CD4-positive, alpha-beta memory T cell (primary cell): ENCODE measurements at regions of chr4 and their contacts with region 1.

Region 1: GRCh38 chr4:42519803-42520417 is 122.6 kb downstream of the SHISA3 start:
- DNase-seq: peak in 4 of 5 donors; percentile 19 to 40 (median 28)
- H3K4me3 ChIP-seq: no peak overlapping the region
- H3K4me3 Mint-ChIP-seq: no peak overlapping the region
- H3K27ac ChIP-seq: no peak overlapping the region
- H3K27ac Mint-ChIP-seq: peak overlapping the region in 1 of 7 donors; percentile 58
- H3K4me1 ChIP-seq: no peaks in the 10 kb centered on the region
- H3K4me1 Mint-ChIP-seq: no peaks in the 10 kb centered on the region
- H3K27me3 ChIP-seq: no peaks in the 10 kb centered on the region
- H3K27me3 Mint-ChIP-seq: no peaks in the 10 kb centered on the region

Region 2: DNA sequence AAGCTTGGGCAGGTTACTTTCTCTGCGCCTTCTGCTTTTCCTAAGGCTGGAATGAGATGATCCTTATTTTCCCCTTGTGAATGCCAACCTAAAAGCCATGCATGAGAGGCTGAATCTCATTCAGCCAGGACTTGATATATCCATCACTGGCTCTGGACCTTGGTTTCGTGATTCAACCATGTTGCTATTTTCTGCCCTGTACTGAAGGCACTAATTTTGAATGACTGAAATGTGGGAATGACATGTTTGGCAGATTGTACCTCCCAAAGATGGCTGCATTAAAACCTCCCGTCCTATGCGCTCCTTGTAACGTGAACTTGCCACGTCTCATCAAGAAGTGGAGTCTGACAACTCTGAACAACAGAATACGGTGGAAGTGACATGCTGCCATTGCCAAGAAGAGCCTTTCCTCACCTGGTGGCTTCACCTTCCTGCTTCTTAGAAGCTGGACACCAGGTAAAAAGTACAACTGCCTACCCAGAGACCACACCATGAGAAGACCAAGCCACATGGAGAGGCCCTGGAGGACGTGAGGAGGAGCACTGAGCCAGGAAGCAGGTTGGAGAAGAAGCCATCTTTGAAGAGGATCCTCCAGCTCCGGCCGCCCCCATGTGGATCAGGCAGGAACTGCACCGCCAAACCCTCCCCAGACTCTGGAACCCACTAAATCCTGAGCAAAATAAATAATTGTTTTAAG is 1595.7 kb before region 1 on chr4:
- CTCF ChIA-PET with region 1: no interaction called
- POLR2A ChIA-PET with region 1: no interaction called
- intact Hi-C with region 1: loop called (anchors 5 kb)
- DNase-seq: peak in 4 of 5 donors; percentile 32 to 47 (median 38)
- H3K4me3 ChIP-seq: no peak overlapping the region
- H3K4me3 Mint-ChIP-seq: no peak overlapping the region
- H3K27ac ChIP-seq: no peak overlapping the region
- H3K27ac Mint-ChIP-seq: peak overlapping the region in 1 of 7 donors; percentile 42
- H3K4me1 ChIP-seq: no peaks in the 10 kb centered on the region
- H3K4me1 Mint-ChIP-seq: peaks cover 0 to 6% (median 2%) of the 10 kb centered on the region in 4 donors
- H3K27me3 ChIP-seq: no peaks in the 10 kb centered on the region
- H3K27me3 Mint-ChIP-seq: peaks cover 14 to 17% of the 10 kb centered on the region in 2 donors

Region 3: DNA sequence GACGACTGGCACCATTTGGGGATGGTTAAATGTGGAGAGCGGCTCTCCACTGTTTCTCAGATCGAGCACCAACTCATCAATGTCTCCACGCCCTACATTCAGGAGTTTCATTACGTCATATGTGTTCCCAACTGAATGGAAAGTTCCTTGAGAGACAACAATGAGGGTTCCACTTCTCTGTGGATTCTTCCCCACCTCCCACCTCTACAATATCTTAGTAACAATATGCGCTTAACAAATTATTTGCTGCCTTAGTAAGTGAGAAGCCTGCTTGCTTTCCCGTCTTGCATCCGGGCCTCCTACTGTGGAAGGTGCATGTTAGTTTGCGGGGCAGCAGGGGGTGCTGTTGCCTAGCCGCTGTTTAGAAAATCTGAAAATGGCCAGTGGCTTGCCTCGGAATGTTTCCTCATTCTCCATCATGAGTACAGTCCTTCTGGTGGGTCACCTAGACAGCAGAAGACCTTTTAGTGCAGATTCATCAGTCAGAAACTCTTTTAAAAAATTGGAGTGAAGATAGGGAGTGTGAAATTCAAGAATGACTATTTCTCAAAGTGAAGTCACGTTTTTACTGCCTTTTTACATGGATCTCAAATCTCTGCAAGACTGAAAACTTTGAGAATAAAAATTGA is 827.1 kb before region 1 on chr4:
- CTCF ChIA-PET with region 1: no interaction called
- POLR2A ChIA-PET with region 1: no interaction called
- intact Hi-C with region 1: loop called (anchors 5 kb)
- DNase-seq: peak in 4 of 5 donors; percentile 2 to 18 (median 9)
- H3K4me3 ChIP-seq: no peak overlapping the region
- H3K4me3 Mint-ChIP-seq: peak overlapping the region in 1 of 8 donors; percentile 35
- H3K27ac ChIP-seq: no peak overlapping the region
- H3K27ac Mint-ChIP-seq: no peak overlapping the region
- H3K4me1 ChIP-seq: no peaks in the 10 kb centered on the region
- H3K4me1 Mint-ChIP-seq: peaks cover 0 to 4% (median 3%) of the 10 kb centered on the region in 4 donors
- H3K27me3 ChIP-seq: no peaks in the 10 kb centered on the region
- H3K27me3 Mint-ChIP-seq: peaks cover 1% of the 10 kb centered on the region in 2 donors

Region 4: GRCh38 chr4:41957634-41958033 is 562.3 kb before region 1 on chr4:
- CTCF ChIA-PET with region 1: no interaction called
- POLR2A ChIA-PET with region 1: no interaction called
- intact Hi-C with region 1: loop called (anchors 2 kb)
- DNase-seq: peak in 3 of 5 donors; percentile 2 to 10 (median 7)
- H3K4me3 ChIP-seq: no peak overlapping the region
- H3K4me3 Mint-ChIP-seq: no peak overlapping the region
- H3K27ac ChIP-seq: no peak overlapping the region
- H3K27ac Mint-ChIP-seq: peak overlapping the region in 1 of 7 donors; percentile 22
- H3K4me1 ChIP-seq: no peaks in the 10 kb centered on the region
- H3K4me1 Mint-ChIP-seq: no peaks in the 10 kb centered on the region
- H3K27me3 ChIP-seq: no peaks in the 10 kb centered on the region
- H3K27me3 Mint-ChIP-seq: no peaks in the 10 kb centered on the region

Region 5: GRCh38 chr4:42371306-42372252 is 148.3 kb before region 1 on chr4:
- CTCF ChIA-PET with region 1: interaction called, 33 read pairs
- POLR2A ChIA-PET with region 1: no interaction called
- intact Hi-C with region 1: no loop called
- DNase-seq: peak in 1 of 5 donors; percentile 2
- H3K4me3 ChIP-seq: no peak overlapping the region
- H3K4me3 Mint-ChIP-seq: no peak overlapping the region
- H3K27ac ChIP-seq: no peak overlapping the region
- H3K27ac Mint-ChIP-seq: no peak overlapping the region
- H3K4me1 ChIP-seq: no peaks in the 10 kb centered on the region
- H3K4me1 Mint-ChIP-seq: no peaks in the 10 kb centered on the region
- H3K27me3 ChIP-seq: no peaks in the 10 kb centered on the region
- H3K27me3 Mint-ChIP-seq: peaks cover 4 to 6% of the 10 kb centered on the region in 2 donors

Region 6: GRCh38 chr4:42489095-42489494 is 30.8 kb before region 1 on chr4:
- CTCF ChIA-PET with region 1: interaction called, 11 read pairs
- POLR2A ChIA-PET with region 1: no interaction called
- intact Hi-C with region 1: no loop called
- DNase-seq: no peak
- H3K4me3 ChIP-seq: no peak overlapping the region
- H3K4me3 Mint-ChIP-seq: no peak overlapping the region
- H3K27ac ChIP-seq: no peak overlapping the region
- H3K27ac Mint-ChIP-seq: no peak overlapping the region
- H3K4me1 ChIP-seq: no peaks in the 10 kb centered on the region
- H3K4me1 Mint-ChIP-seq: peaks cover 0 to 12% (median 4%) of the 10 kb centered on the region in 4 donors
- H3K27me3 ChIP-seq: no peaks in the 10 kb centered on the region
- H3K27me3 Mint-ChIP-seq: no peaks in the 10 kb centered on the region

Region 7: GRCh38 chr4:42531341-42532030 is 11.6 kb after region 1 on chr4:
- CTCF ChIA-PET with region 1: interaction called, 16 read pairs
- POLR2A ChIA-PET with region 1: interaction called, 4 read pairs
- intact Hi-C with region 1: no loop called
- DNase-seq: no peak
- H3K4me3 ChIP-seq: no peak overlapping the region
- H3K4me3 Mint-ChIP-seq: no peak overlapping the region
- H3K27ac ChIP-seq: no peak overlapping the region
- H3K27ac Mint-ChIP-seq: peak overlapping the region in 1 of 7 donors; percentile 72
- H3K4me1 ChIP-seq: no peaks in the 10 kb centered on the region
- H3K4me1 Mint-ChIP-seq: peaks cover 4 to 6% (median 5%) of the 10 kb centered on the region in 4 donors
- H3K27me3 ChIP-seq: no peaks in the 10 kb centered on the region
- H3K27me3 Mint-ChIP-seq: no peaks in the 10 kb centered on the region